Ovary (tissue), 10 donors: ENCODE measurements at regions of chr11 and their contacts with region 1.

Region 1: GRCh38 chr11:44029977-44030911 is 17.5 kb upstream of the ACCSL start:
- DNase-seq: peak; percentile 76 to 89 (median 79)
- H3K4me3 ChIP-seq: no peak overlapping the region
- H3K27ac ChIP-seq: peak overlapping the region; percentile 70 to 97
- H3K4me1 ChIP-seq: peaks cover 19% of the 10 kb centered on the region
- H3K27me3 ChIP-seq: no peaks in the 10 kb centered on the region
- CTCF ChIP-seq: no peak
- EP300 ChIP-seq: peak; percentile 80
- POLR2A ChIP-seq: no peak

Region 2: GRCh38 chr11:43987384-43988039 is 42.7 kb before region 1 on chr11:
- intact Hi-C with region 1: loop called in 3 of 4 experiments (anchors 5 kb)
- DNase-seq: peak; percentile 99 to 100 (median 99)
- H3K4me3 ChIP-seq: no peak overlapping the region
- H3K27ac ChIP-seq: peak overlapping the region; percentile 78 to 93
- H3K4me1 ChIP-seq: peaks cover 35% of the 10 kb centered on the region
- H3K27me3 ChIP-seq: no peaks in the 10 kb centered on the region
- CTCF ChIP-seq: peak in 1 of 3 donors; percentile 1
- EP300 ChIP-seq: peak; percentile 84
- POLR2A ChIP-seq: no peak

Region 3: DNA sequence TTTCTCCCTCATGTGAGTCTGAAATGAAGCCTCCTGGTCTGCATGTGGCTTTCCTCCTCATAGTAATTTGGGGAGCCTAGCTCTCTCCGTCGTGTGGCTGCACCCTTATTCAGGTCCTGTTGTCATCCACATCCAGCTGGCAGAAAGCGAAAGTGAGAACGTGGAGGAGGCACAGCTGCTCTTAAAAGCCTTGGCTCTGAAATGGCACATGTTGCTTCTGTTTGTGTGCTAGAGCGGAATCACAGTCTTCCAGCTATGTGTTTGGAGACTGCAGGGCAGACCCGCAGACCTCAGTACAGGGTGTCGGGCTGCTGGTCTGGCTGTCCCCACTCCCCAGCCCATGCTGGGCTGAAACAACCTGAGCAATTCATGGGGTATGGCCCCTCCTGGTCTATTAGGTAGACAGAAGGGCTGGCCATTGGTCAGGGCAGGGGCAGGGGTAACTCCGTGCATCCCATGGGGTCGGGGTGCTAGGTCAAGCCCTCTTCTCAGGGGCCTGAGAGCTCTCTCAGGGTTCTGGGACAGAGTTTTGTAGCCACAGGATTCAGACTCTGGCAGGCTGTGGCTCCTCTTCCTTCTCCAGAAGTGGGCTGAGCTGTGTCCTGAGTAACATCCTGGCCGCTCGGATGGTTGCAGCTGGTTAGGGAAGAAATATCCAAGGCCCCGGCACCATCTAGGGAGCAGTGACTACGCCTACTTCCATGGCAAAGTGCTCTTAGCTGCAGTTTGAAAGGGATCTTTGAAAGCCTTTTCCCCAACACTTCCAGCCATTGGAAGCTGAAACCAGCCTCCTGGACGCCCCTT is 37.2 kb before region 1 on chr11:
- intact Hi-C with region 1: loop called in 3 of 4 experiments (anchors 5 kb)
- DNase-seq: peak; percentile 37 to 50 (median 47)
- H3K4me3 ChIP-seq: no peak overlapping the region
- H3K27ac ChIP-seq: peak overlapping the region; percentile 60 to 87
- H3K4me1 ChIP-seq: peaks cover 24% of the 10 kb centered on the region
- H3K27me3 ChIP-seq: no peaks in the 10 kb centered on the region
- CTCF ChIP-seq: no peak
- EP300 ChIP-seq: no peak
- POLR2A ChIP-seq: no peak

Region 4: DNA sequence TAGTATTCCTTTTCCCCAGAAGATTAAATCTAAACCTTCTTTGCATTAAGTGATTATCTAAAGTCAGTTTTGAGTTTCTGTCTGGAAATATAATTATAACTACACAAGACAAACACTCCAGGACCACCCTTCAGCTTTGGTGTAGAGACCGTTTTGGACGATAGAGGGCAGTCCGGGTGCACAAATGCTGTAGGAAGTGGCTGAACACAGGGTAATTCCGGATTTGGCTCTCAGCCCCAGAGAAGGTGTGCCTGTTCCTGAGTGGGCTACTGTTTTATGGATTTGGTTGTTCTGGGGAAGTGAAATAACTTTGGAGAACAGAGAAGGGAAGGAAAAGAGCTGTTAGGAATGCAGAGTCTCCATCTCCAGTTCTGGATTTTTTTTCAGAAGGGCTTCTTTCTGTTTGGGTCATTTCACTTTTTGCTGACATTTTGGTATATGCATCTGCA is 80.0 kb after region 1 on chr11:
- intact Hi-C with region 1: no loop called
- DNase-seq: peak; percentile 19 to 54 (median 43)
- H3K4me3 ChIP-seq: no peak overlapping the region
- H3K27ac ChIP-seq: no peak overlapping the region
- H3K4me1 ChIP-seq: peaks cover 1% of the 10 kb centered on the region
- H3K27me3 ChIP-seq: no peaks in the 10 kb centered on the region
- CTCF ChIP-seq: peak; percentile 14 to 44 (median 29)
- EP300 ChIP-seq: no peak
- POLR2A ChIP-seq: no peak

Region 5: DNA sequence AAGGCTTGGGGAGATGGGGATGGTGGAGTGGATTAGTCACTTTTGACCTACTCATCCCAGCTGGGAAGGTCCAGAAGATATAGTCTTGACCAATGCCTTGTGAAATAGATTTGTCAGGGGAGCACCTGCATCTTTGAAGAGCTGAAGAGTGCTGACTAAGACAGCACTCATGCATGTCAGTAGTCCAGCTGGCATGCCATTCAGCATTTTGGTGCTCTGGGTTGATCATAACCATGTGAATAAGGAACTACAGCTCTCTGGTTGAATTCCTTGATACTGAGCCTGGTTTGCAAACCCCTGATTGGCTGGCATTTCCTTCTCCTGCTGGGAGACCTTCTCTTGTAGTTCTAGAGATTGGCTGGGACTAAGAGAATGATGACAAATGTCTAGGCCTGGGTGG is 386.5 kb after region 1 on chr11:
- intact Hi-C with region 1: no loop called
- DNase-seq: no peak
- H3K4me3 ChIP-seq: no peak overlapping the region
- H3K27ac ChIP-seq: no peak overlapping the region
- H3K4me1 ChIP-seq: no peaks in the 10 kb centered on the region
- H3K27me3 ChIP-seq: no peaks in the 10 kb centered on the region
- CTCF ChIP-seq: no peak
- EP300 ChIP-seq: no peak
- POLR2A ChIP-seq: no peak